MCF 10A (cell line): ENCODE measurements at regions of chr5 and their contacts with region 1.

Region 1: DNA sequence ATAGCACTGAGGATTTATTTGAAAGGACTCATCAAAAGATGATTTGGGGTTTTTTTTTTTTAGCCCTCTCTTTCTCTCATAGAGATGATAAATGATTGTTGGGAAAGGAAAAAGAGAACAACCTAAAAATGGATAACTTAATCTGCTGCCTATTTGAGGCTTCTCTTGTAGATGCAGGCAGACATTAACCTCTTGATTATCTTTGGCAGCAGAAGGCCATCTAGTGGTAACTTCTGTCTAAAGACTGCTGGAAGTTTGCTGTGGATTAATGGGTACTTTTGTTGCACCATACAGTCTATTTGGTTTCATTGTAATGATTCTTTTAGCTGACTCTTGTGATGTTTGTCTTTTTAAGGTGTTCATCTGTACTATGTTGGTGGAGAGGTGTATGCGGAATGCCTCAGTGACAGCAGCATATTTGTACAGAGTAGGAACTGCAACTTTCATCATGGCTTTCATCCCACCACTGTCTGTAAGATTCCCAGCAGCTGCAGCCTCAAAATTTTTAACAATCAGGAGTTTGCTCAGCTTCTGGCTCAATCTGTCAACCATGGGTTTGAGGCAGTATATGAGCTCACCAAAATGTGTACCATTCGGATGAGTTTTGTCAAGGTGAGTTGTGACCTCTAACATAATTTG is 18.8 kb downstream of the SMIM32 start:
- DNase-seq: peak; percentile 69
- H3K4me3 Mint-ChIP-seq: no peak overlapping the region
- H3K27ac Mint-ChIP-seq: no peak overlapping the region
- H3K4me1 Mint-ChIP-seq: peaks cover 4% of the 10 kb centered on the region
- H3K27me3 Mint-ChIP-seq: no peaks in the 10 kb centered on the region
- CTCF ChIP-seq: peak; percentile 91

Region 2: GRCh38 chr5:135887351-135887864 is 286.7 kb before region 1 on chr5:
- CTCF ChIA-PET with region 1: interaction called, 68 read pairs
- POLR2A ChIA-PET with region 1: interaction called, 7 read pairs
- intact Hi-C with region 1: loop called (anchors 1 kb)
- DNase-seq: peak; percentile 90
- H3K4me3 Mint-ChIP-seq: no peak overlapping the region
- H3K27ac Mint-ChIP-seq: no peak overlapping the region
- H3K4me1 Mint-ChIP-seq: no peaks in the 10 kb centered on the region
- H3K27me3 Mint-ChIP-seq: peaks cover 37% of the 10 kb centered on the region
- CTCF ChIP-seq: peak; percentile 96

Region 3: DNA sequence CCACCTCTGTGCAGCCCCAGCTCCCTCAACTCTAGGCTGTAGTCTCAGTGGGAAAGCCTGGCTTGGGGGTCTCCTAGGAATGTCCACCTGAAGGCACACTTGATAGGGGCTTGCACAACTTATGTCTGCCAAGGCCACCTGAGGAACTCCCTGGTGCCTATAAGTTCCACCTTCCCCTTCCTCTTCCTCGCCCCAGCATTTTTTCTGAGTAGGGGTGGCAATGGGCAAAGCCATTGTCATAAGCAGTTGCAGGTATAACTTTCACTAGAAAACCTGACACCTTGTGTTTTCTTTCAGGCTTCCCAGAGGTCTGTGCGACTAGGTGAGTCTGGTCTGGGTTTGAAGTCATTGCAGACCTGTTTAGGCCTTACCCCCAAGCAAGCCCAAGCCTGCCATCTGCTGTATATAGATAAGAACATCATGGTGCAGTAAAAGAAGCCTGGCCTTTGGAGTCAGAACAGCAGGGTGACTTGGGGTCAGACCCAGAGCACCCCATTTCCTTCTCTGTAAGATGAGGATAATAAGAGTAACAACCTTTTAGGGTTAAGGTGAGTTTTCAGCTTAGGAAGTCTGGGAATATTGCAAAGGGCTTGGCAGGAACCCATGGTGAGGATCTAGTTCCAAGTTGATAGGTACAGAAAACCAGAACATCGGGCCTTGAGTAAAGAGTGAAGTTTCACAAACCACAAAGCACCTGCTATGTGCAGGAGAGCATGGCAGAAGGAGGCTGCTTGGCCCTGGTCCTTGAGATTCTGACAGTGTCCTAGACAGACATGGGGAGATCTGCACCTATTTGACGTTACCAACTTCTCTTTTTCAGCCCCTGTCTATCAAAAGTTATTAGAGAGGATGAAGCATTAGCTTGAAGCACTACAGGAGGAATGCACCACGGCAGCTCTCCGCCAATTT is 111.5 kb before region 1 on chr5:
- CTCF ChIA-PET with region 1: interaction called, 31 read pairs
- POLR2A ChIA-PET with region 1: interaction called, 4 read pairs
- intact Hi-C with region 1: loop called (anchors 2 kb)
- DNase-seq: peak; percentile 79
- H3K4me3 Mint-ChIP-seq: no peak overlapping the region
- H3K27ac Mint-ChIP-seq: no peak overlapping the region
- H3K4me1 Mint-ChIP-seq: peaks cover 27% of the 10 kb centered on the region
- H3K27me3 Mint-ChIP-seq: no peaks in the 10 kb centered on the region
- CTCF ChIP-seq: peak; percentile 80

Region 4: GRCh38 chr5:136087961-136088871 is 85.9 kb before region 1 on chr5:
- CTCF ChIA-PET with region 1: interaction called, 62 read pairs
- POLR2A ChIA-PET with region 1: no interaction called
- intact Hi-C with region 1: no loop called
- DNase-seq: peak; percentile 84
- H3K4me3 Mint-ChIP-seq: no peak overlapping the region
- H3K27ac Mint-ChIP-seq: peak overlapping the region; percentile 8
- H3K4me1 Mint-ChIP-seq: peaks cover 10% of the 10 kb centered on the region
- H3K27me3 Mint-ChIP-seq: no peaks in the 10 kb centered on the region
- CTCF ChIP-seq: no peak

Region 5: GRCh38 chr5:136141561-136141960 is 32.6 kb before region 1 on chr5:
- CTCF ChIA-PET with region 1: interaction called, 24 read pairs
- POLR2A ChIA-PET with region 1: interaction called, 4 read pairs
- intact Hi-C with region 1: no loop called
- DNase-seq: no peak
- H3K4me3 Mint-ChIP-seq: no peak overlapping the region
- H3K27ac Mint-ChIP-seq: no peak overlapping the region
- H3K4me1 Mint-ChIP-seq: peaks cover 26% of the 10 kb centered on the region
- H3K27me3 Mint-ChIP-seq: no peaks in the 10 kb centered on the region
- CTCF ChIP-seq: no peak

Region 6: DNA sequence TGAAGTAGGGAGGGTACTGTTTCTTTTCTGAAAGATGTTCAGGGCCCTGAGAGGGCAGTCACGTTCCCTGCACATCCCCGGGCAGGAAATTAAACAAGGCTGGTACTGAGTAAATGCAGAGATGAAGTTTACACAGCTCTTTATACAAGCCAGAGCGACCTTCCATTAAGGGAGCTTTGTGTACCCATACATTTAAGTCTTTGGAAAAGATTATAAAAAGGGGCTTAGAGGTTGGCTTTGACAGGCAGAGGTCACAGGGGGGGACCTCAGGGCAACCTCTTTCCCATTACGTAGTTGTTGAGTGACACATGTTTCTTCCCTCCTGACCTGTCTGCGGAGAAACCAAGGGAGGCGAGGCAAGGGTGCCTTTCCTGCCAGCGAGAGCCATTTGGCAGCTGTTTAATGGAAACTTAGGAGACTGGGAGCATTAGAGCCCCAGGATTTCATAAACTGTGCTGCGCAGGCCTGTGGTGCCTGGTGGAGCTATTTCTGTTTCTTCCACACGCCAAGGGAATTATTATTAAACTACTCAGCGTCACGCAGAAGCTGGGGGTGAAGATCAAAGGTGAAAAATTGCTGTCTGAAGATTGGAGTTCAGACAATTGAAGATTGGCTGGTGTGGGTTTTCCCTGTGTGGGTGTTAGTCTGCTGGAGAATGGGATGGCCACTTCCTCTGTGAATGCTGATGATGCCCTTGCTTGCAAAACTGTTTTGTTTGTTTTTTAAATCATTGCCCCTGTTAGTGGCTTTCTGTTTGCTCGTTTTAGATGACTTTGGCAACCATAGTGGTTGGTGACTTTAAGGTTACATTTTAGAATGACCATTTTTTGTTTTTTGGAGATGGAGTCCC is 22.1 kb after region 1 on chr5:
- CTCF ChIA-PET with region 1: interaction called, 13 read pairs
- POLR2A ChIA-PET with region 1: no interaction called
- intact Hi-C with region 1: no loop called
- DNase-seq: no peak
- H3K4me3 Mint-ChIP-seq: no peak overlapping the region
- H3K27ac Mint-ChIP-seq: no peak overlapping the region
- H3K4me1 Mint-ChIP-seq: no peaks in the 10 kb centered on the region
- H3K27me3 Mint-ChIP-seq: peaks cover 34% of the 10 kb centered on the region
- CTCF ChIP-seq: no peak